ENCODE measurements at regions of chr11 and their contacts with region 1.

Region 1: GRCh38 chr11:77687085-77687484 is 49.5 kb upstream of the CLNS1A start:
- DNase-seq: no peak
- ATAC-seq: no peak
- H3K4me3 ChIP-seq: no peak overlapping the region
- H3K27ac ChIP-seq: no peak overlapping the region
- H3K4me1 ChIP-seq: no peaks in the 10 kb centered on the region
- H3K27me3 ChIP-seq: no peaks in the 10 kb centered on the region
- CTCF ChIP-seq: no peak
- POLR2A ChIP-seq: no peak

Region 2: DNA sequence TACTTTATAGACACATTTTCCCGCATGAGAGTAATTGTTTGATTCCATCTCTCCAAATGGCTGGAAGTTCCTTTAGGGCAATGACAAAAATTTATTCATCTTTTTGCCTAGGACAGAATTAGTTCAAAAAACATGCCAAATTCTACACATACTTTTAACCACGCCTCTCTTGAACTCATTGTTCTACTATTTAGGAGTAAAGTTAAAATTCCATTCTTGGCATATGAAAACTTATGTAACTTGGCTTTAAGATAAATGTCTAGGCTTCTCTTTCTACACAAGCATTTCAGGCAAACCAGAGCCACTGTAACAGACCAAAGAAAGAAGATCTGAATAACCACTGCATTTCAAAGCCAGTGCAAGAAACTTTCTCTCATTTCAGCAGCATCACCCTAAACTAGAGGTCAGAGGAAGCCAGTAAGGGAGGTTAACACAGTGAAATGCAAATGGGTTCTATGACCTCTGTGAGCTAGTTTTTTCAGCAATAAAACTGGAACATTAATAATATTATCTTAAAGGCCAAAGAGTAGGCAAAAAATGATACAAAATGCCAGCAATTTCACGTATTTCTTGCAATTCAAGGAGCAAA is 60.4 kb after region 1 on chr11:
- intact Hi-C with region 1: loop called in 1 of 10 experiments (anchors 10 kb)
- DNase-seq: no peak
- ATAC-seq: no peak
- H3K4me3 ChIP-seq: no peak overlapping the region
- H3K27ac ChIP-seq: no peak overlapping the region
- H3K4me1 ChIP-seq: peaks cover 0 to 38% (median 22%) of the 10 kb centered on the region in 12 donors
- H3K27me3 ChIP-seq: no peaks in the 10 kb centered on the region
- CTCF ChIP-seq: no peak
- POLR2A ChIP-seq: no peak